Mammary epithelial cell (primary cell): ENCODE measurements at regions of chr6 and their contacts with region 1.

Region 1: GRCh38 chr6:20877008-20877937 is 343.0 kb downstream of the CDKAL1 start:
- DNase-seq: peak; percentile 98
- H3K4me3 ChIP-seq: no peak overlapping the region
- H3K27ac ChIP-seq: peak overlapping the region; percentile 88
- H3K4me1 ChIP-seq: peaks cover 27% of the 10 kb centered on the region
- H3K27me3 ChIP-seq: no peaks in the 10 kb centered on the region
- CTCF ChIP-seq: no peak

Region 2: GRCh38 chr6:19968201-19968600 is 909.1 kb before region 1 on chr6:
- CTCF ChIA-PET with region 1: no interaction called
- dilution Hi-C with region 1: no loop called
- in situ Hi-C with region 1: no loop called
- intact Hi-C with region 1: no loop called
- DNase-seq: no peak
- H3K4me3 ChIP-seq: no peak overlapping the region
- H3K27ac ChIP-seq: no peak overlapping the region
- H3K4me1 ChIP-seq: no peaks in the 10 kb centered on the region
- H3K27me3 ChIP-seq: peaks cover 2% of the 10 kb centered on the region
- CTCF ChIP-seq: no peak

Region 3: GRCh38 chr6:20137837-20138236 is 739.4 kb before region 1 on chr6:
- CTCF ChIA-PET with region 1: no interaction called
- dilution Hi-C with region 1: no loop called
- in situ Hi-C with region 1: no loop called
- intact Hi-C with region 1: no loop called
- DNase-seq: no peak
- H3K4me3 ChIP-seq: no peak overlapping the region
- H3K27ac ChIP-seq: no peak overlapping the region
- H3K4me1 ChIP-seq: no peaks in the 10 kb centered on the region
- H3K27me3 ChIP-seq: no peaks in the 10 kb centered on the region
- CTCF ChIP-seq: no peak

Region 4: GRCh38 chr6:20564269-20564668 is 313.0 kb before region 1 on chr6:
- CTCF ChIA-PET with region 1: no interaction called
- dilution Hi-C with region 1: no loop called
- in situ Hi-C with region 1: no loop called
- intact Hi-C with region 1: loop called (anchors 5 kb)
- DNase-seq: no peak
- H3K4me3 ChIP-seq: no peak overlapping the region
- H3K27ac ChIP-seq: no peak overlapping the region
- H3K4me1 ChIP-seq: peaks cover 7% of the 10 kb centered on the region
- H3K27me3 ChIP-seq: no peaks in the 10 kb centered on the region
- CTCF ChIP-seq: peak; percentile 45 to 48

Region 5: GRCh38 chr6:21003780-21004541 is 126.7 kb after region 1 on chr6:
- CTCF ChIA-PET with region 1: no interaction called
- dilution Hi-C with region 1: no loop called
- in situ Hi-C with region 1: no loop called
- intact Hi-C with region 1: loop called (anchors 5 kb)
- DNase-seq: peak; percentile 51
- H3K4me3 ChIP-seq: no peak overlapping the region
- H3K27ac ChIP-seq: peak overlapping the region; percentile 13
- H3K4me1 ChIP-seq: peaks cover 21% of the 10 kb centered on the region
- H3K27me3 ChIP-seq: no peaks in the 10 kb centered on the region
- CTCF ChIP-seq: no peak

Region 6: GRCh38 chr6:21227486-21227885 is 350.2 kb after region 1 on chr6:
- CTCF ChIA-PET with region 1: no interaction called
- dilution Hi-C with region 1: no loop called
- in situ Hi-C with region 1: no loop called
- intact Hi-C with region 1: loop called (anchors 2 kb)
- DNase-seq: peak; percentile 85
- H3K4me3 ChIP-seq: no peak overlapping the region
- H3K27ac ChIP-seq: peak overlapping the region; percentile 80
- H3K4me1 ChIP-seq: peaks cover 39% of the 10 kb centered on the region
- H3K27me3 ChIP-seq: no peaks in the 10 kb centered on the region
- CTCF ChIP-seq: peak in 1 of 2 donors; percentile 52

Region 7: DNA sequence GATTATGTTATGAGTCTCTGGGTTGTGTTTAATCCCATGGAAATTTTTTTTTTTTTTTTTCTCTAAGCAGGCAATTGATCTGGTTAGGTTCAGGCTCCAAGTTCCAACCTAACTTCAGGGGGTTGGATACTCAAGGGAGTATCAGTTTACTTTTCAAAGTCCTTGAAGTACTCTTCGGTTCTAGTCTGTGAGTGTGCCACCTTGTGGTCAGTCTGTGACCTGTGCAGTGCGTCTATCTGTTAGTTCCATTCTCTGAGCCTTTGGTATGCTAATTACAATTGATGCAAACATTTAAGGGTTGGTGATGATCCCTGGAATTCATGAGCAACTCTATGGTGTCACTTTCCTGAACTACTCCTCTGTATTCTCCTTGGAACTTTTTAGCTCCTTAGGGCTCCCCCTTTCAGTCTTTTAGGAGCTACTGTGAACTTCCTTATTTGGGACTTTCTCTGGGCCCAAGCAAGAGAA is 1058.3 kb after region 1 on chr6:
- CTCF ChIA-PET with region 1: no interaction called
- dilution Hi-C with region 1: no loop called
- in situ Hi-C with region 1: no loop called
- intact Hi-C with region 1: loop called (anchors 5 kb)
- DNase-seq: peak; percentile 51
- H3K4me3 ChIP-seq: no peak overlapping the region
- H3K27ac ChIP-seq: no peak overlapping the region
- H3K4me1 ChIP-seq: no peaks in the 10 kb centered on the region
- H3K27me3 ChIP-seq: no peaks in the 10 kb centered on the region
- CTCF ChIP-seq: peak; percentile 55 to 59

Region 8: GRCh38 chr6:22828179-22829062 is 1951.1 kb after region 1 on chr6:
- CTCF ChIA-PET with region 1: interaction called, 3 read pairs
- dilution Hi-C with region 1: no loop called
- in situ Hi-C with region 1: no loop called
- intact Hi-C with region 1: loop called (anchors 5 kb)
- DNase-seq: peak; percentile 97
- H3K4me3 ChIP-seq: peak overlapping the region in 2 of 3 experiments; percentile 5 to 19
- H3K27ac ChIP-seq: peak overlapping the region; percentile 90
- H3K4me1 ChIP-seq: peaks cover 21% of the 10 kb centered on the region
- H3K27me3 ChIP-seq: no peaks in the 10 kb centered on the region
- CTCF ChIP-seq: peak; percentile 80 to 85